HEK293 (cell line): ENCODE measurements at regions of chr17 and their contacts with region 1.

Region 1: DNA sequence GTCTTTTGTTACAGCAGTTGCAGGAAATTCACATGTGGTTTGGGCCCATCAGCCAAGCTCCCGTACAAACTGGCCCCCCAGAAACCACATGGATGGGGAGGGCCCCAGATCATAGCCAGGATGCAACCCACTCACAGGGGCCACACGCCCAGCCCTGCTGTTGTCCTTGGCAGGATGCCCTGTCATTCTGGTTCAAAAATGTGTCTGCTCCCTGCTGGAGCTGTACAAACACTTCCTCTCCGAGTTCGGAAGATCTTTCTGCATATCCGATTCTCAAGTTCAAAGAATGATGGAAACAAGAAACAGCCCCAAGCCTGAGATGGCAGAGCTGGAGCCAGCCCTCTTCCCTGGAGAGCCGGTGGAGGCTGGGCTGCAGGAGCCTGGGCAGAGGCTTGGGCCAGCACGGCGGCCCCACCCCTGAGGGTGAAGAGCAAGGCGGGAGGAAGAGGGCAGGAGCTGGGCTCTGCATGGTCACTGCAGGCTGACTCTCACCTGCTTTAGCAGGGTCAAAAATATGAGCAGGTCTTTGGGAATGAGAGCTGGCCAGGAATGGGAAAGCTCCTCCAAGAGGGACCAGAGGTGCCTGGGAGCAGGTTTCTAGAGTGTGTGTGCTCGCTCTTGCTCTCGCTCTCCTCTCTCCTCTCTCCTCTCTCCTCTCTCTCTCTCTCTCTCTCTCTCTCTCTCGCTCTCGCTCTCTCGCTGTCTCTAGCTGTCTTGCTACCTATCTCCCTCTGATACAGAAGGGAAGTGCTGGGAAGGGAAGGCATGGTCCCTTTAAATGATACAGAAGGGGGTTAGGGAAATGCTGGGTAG is 34.7 kb upstream of the ENPP7 start:
- H3K4me3 ChIP-seq: no peak overlapping the region
- H3K27ac ChIP-seq: peak overlapping the region; percentile 24; the same call in 1 of the 2 replicates
- H3K4me1 ChIP-seq: peaks cover 13% of the 10 kb centered on the region
- CTCF ChIP-seq: no peak

Region 2: GRCh38 chr17:79658811-79659207 is 37.2 kb before region 1 on chr17:
- CTCF ChIA-PET with region 1: interaction called, 11 read pairs
- POLR2A ChIA-PET with region 1: no interaction called
- H3K4me3 ChIP-seq: no peak overlapping the region
- H3K27ac ChIP-seq: no peak overlapping the region
- H3K4me1 ChIP-seq: no peaks in the 10 kb centered on the region
- CTCF ChIP-seq: no peak

Region 3: DNA sequence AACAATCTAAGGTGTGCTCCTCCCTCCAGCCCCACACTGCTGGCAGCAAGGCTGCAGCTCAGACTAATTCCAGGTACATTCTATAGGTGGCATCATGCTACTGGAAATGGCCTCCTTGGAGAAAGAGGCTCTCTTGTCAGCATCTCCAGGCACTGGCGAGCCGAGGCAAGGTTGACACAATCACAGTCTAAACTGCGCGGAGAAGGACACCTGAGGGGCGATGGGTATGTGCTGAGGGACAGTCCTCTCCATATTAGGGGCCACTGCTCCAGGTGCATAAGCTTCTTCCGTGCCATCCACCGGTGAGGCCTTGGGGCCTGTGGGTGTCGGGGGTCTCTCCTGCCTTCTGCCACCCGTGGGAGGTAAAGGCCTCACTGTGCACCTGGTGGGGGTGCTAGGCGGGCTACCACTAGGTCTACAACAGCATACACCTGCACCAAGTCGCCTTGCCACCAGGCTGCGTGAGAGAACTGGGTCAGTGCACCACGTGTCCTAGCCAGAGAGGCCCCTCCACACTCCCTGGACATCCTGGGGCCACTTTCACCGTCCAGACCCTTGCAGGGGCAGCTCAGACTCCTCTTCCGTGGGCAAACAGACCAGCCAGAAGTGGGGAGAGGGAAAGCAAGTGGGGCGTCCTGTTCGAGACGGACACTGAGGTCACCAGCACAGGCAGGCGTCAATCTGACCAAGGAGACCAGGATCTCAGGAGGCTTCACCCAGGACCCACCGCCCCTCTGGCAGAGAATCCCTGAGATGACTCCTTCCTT is 112.9 kb after region 1 on chr17:
- CTCF ChIA-PET with region 1: no interaction called
- POLR2A ChIA-PET with region 1: no interaction called
- H3K4me3 ChIP-seq: no peak overlapping the region
- H3K27ac ChIP-seq: no peak overlapping the region
- H3K4me1 ChIP-seq: peaks cover 17% of the 10 kb centered on the region
- CTCF ChIP-seq: no peak